ENCODE measurements at regions of chr15 and their contacts with region 1.

Region 1: DNA sequence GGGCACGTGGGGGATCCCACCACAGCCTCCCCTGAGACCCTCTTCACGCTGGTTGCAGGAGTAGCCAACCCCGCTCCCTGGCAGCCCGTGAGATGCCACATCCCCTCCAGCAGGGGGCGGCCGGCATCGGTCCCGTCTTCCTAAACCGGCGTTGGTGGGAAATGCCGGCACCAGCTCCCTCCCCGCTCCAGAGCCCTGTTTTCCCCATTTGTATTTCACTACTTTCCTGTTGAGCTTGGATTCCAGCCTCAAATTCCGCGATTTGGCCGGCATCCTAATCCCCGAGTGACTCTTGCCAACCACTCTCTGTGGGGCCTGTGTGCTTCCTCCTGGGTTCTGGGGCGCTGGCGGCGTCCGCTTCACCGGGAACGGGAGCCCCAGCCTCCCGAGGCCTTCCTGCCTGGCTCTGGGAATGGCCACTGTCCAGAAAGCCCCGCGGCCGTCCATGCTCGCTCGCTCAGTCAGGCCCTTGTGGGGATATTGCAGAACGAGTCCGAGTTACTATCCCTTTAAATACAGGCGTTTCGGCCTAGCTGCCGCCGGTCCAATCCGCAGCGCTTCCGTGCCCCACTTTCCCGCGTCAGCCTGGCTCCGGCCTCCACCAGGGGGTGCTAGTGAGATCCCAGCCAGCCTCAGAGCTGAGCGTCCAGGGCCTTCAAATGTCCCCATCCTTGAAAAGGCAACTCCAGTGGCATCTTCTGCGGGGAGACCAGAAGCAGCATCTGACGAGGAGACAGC is 8.1 kb upstream of the ADAMTS17 start:
- DNase-seq: peak; percentile 63 to 92
- H3K4me3 ChIP-seq: peak overlapping the region; percentile 35
- H3K4me1 ChIP-seq: no peaks in the 10 kb centered on the region
- H3K27me3 ChIP-seq: 0 out of 2 replicates have a peak, but pooled peaks cover 2% of the 10 kb centered on the region

Region 2: GRCh38 chr15:100572362-100572983 is 222.6 kb after region 1 on chr15:
- in situ Hi-C with region 1: loop called (anchors 10 kb)
- DNase-seq: peak in 1 of 2 experiments; percentile 14
- H3K4me3 ChIP-seq: no peak overlapping the region
- H3K4me1 ChIP-seq: no peaks in the 10 kb centered on the region
- H3K27me3 ChIP-seq: no peaks in the 10 kb centered on the region

Region 3: DNA sequence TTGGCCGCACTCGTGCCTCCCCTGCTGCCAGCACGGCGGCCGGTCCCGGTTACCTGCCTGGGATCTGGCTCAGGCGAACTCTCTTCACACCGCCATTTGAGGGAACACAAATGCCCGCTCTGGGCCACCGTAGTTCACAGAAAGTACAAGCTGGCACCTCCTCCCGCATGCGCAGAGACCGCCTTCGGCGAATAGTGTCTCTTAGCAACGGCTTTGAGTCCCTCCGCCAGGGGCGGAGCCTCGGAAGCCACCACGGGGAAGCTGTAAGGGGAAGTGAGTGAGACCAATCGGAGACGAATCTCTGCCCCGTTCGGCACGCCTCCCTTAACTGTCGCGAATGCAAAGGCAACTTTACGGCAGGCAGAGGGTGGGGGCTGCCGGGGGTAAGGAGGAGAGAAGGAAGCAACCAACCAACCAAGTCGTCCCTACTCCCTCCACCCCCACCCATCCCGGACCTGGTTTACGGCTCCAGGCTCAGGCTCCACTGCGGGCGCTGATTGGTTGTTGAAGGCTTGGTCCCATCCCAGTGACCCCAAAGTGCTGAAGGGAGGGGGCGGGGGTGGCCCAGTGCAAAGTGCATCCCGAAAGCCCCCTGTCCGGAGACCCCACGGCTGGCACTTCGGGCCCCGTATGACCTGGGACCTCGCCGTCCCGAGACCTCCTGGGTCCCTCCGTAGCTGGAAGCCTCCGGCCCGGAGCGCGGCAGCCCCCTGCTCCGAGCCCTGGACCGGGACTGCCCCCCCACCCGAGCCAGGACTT is 252.4 kb after region 1 on chr15 and contains the starts of genes ASB7 and LINS1:
- in situ Hi-C with region 1: loop called (anchors 10 kb)
- DNase-seq: peak; percentile 99
- H3K4me3 ChIP-seq: peak within 1 kb of the TSS; percentile 94
- H3K4me1 ChIP-seq: peaks cover 4% of the 10 kb centered on the region
- H3K27me3 ChIP-seq: no peaks in the 10 kb centered on the region

Measured in HAP-1 (cell line).